Activated CD4-positive, alpha-beta T cell treated with anti-CD3 and anti-CD28 coated beads for 36 hours (primary cell): ENCODE measurements at regions of chr16 and their contacts with region 1.

Region 1: DNA sequence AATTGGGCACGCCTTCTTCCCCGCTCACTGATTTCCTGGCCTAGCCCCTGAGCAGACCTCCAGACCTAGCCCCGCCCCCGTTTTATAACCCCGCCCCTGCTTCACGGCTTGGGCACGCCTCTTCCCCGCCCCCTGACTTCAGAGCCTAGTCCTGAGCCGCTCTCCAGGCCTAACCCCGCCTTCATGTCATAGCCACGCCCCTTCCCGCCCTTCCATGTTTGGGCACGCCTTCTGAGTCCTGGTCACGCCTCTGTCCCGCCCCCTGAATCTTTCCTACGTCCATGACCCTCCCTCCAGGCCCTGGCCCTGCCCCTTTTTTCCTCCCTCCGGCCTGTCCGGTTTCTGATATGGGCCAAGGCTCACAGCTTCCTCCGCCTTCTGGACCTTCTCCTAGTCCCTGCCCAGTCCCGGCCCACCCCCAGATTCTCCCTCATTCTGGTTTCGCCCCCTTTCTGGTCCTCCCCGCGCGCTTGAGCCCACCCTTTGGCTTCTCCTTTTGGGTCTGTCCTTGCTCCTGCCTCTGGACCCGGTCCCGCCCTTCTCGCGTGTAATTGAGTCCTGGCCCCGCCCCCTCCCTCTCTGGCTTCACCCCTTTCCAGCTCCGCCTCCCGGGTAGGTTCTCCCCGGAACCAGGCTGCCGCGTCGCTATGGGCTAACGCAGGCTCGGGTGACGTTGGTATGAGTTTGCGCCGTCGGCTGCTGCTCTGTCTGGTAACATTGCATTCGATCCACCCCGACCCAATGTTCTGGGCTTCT is 15.1 kb upstream of the EEF2K start:
- DNase-seq: peak; percentile 99
- ATAC-seq: peak; percentile 66
- H3K4me3 Mint-ChIP-seq: peak overlapping the region; percentile 86
- H3K27ac Mint-ChIP-seq: peak overlapping the region; percentile 99
- H3K4me1 Mint-ChIP-seq: peaks cover 57% of the 10 kb centered on the region
- H3K27me3 Mint-ChIP-seq: no peaks in the 10 kb centered on the region

Region 2: GRCh38 chr16:21599233-21600030 is 591.5 kb before region 1 on chr16 and contains the start of gene METTL9:
- CTCF ChIA-PET with region 1: no interaction called
- POLR2A ChIA-PET with region 1: no interaction called
- intact Hi-C with region 1: loop called in 1 of 2 experiments (anchors 1 kb)
- DNase-seq: peak; percentile 97
- ATAC-seq: peak; percentile 95
- H3K4me3 Mint-ChIP-seq: peak within 1 kb of the TSS; percentile 90
- H3K27ac Mint-ChIP-seq: peak within 1 kb of the TSS; percentile 96
- H3K4me1 Mint-ChIP-seq: peaks cover 54% of the 10 kb centered on the region
- H3K27me3 Mint-ChIP-seq: no peaks in the 10 kb centered on the region
- total RNA-seq, gene METTL9: 78.3 to 98.0 TPM

Region 3: DNA sequence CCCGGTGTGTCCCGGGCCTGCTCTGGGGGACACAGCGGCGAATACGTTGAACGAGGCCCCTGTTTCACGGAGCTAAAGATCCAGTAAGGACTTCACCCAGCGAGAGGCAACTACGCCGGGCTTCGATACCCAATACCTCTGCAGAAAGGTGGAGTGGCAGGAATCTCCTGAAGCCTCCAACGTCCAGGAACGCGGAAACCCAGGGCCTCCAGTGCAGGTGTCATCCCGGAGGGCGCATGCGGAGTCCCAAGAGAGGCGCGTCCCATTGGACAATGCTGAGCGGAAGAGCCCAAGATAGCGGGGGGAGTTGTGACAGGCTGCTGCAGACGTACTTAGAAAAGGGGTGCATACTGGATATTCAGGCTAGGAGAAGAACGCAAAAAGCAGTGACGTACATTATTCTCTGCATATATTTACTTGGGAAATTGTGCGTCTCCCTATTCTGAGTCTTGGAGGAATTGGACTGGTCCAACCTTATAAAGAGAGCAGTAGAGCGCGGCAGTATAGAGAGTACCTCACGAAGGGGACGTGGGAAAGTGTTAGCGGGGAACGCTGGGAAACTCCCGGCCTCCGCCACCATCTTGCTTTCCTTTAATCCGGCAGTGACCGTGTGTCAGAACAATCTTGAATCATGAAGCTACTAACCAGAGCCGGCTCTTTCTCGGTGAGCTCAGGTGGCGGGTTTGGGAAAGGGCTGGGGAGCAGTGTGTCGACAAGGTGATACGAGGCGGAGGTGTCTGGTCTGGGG is 238.0 kb before region 1 on chr16 and contains the start of gene UQCRC2:
- CTCF ChIA-PET with region 1: interaction called, 15 read pairs
- POLR2A ChIA-PET with region 1: no interaction called
- intact Hi-C with region 1: loop called (anchors 1 kb)
- DNase-seq: peak; percentile 92
- ATAC-seq: peak; percentile 93
- H3K4me3 Mint-ChIP-seq: peak within 1 kb of the TSS; percentile 98
- H3K27ac Mint-ChIP-seq: peak within 1 kb of the TSS; percentile 100
- H3K4me1 Mint-ChIP-seq: peaks cover 58% of the 10 kb centered on the region
- H3K27me3 Mint-ChIP-seq: no peaks in the 10 kb centered on the region
- total RNA-seq, gene UQCRC2: 321 to 367 TPM

Region 4: DNA sequence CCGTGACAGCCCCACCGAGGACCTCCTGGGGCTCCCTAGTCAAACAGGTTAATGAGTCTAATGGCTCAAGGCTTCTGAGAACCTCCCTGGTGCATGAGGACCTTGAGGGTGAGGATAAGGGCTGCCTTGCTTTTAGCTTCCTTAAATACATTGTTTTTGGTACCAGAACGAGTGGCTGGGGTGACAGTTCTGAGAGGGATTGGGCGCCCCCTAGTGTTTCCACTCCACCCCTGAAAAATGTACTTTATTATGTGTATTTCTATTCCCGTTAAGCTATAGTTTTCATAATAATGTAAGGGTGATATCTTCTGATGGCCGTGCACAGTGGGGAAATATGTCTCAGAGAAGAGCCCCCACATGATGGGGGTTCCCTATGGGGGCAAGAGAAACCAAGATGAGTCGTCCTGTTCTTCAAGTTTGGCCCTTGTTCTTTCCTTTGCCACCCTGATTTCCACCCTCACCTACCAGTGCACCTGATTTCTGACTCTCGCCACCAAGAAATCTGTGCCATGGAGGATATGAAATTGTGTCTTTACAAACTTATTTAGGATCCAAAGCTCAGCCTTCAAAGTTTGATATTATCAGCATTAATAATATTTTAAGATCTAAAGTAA is 113.1 kb before region 1 on chr16:
- CTCF ChIA-PET with region 1: interaction called, 45 read pairs
- POLR2A ChIA-PET with region 1: interaction called, 3 read pairs
- intact Hi-C with region 1: loop called (anchors 1 to 5 kb)
- DNase-seq: peak; percentile 85
- ATAC-seq: peak; percentile 81
- H3K4me3 Mint-ChIP-seq: no peak overlapping the region
- H3K27ac Mint-ChIP-seq: no peak overlapping the region
- H3K4me1 Mint-ChIP-seq: peaks cover 9% of the 10 kb centered on the region
- H3K27me3 Mint-ChIP-seq: no peaks in the 10 kb centered on the region

Region 5: GRCh38 chr16:22297114-22297878 is 106.3 kb after region 1 on chr16 and contains the start of gene POLR3E:
- CTCF ChIA-PET with region 1: interaction called, 24 read pairs
- POLR2A ChIA-PET with region 1: interaction called, 5 read pairs
- intact Hi-C with region 1: loop called (anchors 1 kb)
- DNase-seq: peak; percentile 100
- ATAC-seq: peak; percentile 87
- H3K4me3 Mint-ChIP-seq: peak within 1 kb of the TSS; percentile 93
- H3K27ac Mint-ChIP-seq: peak within 1 kb of the TSS; percentile 96
- H3K4me1 Mint-ChIP-seq: peaks cover 38% of the 10 kb centered on the region
- H3K27me3 Mint-ChIP-seq: no peaks in the 10 kb centered on the region
- total RNA-seq, gene POLR3E: 70.9 to 87.4 TPM

Region 6: DNA sequence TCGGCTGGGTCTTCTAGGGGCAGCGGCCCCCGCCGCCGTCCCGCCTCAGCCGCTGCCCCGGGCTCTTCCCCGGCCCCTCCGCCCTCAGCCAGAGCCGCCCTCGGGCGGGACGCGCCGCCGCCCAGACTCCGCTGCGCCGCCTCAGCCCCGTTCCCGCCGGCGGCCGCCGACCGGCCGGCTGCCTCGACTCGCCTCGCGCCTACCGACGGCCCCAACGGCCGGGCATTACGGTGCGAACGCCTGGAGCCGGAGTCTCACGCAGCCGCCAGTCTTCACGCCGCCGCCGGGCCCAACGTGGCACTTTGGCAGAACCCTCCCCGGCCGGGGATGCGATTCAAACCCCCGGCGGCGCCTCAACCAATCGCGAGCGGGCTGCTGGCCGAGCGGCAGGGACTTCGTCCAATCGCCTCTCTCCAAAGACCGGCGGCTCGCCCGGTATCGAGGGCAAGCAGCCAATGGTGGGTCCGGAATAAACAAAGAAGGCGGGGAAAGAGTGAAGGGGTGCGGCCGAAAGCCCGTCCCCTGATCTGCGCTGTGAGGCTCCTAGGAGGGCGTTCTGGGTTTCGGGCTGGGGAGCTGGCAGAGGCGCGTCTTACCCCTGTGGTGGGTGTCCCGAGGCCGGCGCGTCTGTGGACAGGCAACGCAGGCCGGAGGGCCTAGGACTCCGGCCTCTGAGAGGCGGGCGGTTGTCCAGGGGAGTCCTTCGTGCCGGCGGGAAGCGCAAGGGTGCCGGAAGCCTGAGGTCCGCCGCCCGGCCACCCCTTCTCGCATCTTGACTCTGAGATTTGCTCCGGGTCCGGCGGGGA is 183.6 kb after region 1 on chr16 and contains the start of gene CDR2:
- CTCF ChIA-PET with region 1: no interaction called
- POLR2A ChIA-PET with region 1: no interaction called
- intact Hi-C with region 1: loop called (anchors 1 to 5 kb)
- DNase-seq: peak; percentile 99
- ATAC-seq: peak; percentile 95
- H3K4me3 Mint-ChIP-seq: peak within 1 kb of the TSS; percentile 97
- H3K27ac Mint-ChIP-seq: peak within 1 kb of the TSS; percentile 95
- H3K4me1 Mint-ChIP-seq: peaks cover 38% of the 10 kb centered on the region
- H3K27me3 Mint-ChIP-seq: no peaks in the 10 kb centered on the region
- total RNA-seq, gene CDR2: 29.5 to 33.7 TPM